Naive thymus-derived CD4-positive, alpha-beta T cell (primary cell): ENCODE measurements at regions of chr7 and their contacts with region 1.

Region 1: GRCh38 chr7:8125680-8126444 is 136.1 kb downstream of the ICA1 start:
- DNase-seq: peak; percentile 47 to 83 (median 77)
- ATAC-seq: peak; percentile 95
- H3K4me3 ChIP-seq: peak overlapping the region; percentile 9
- H3K4me3 Mint-ChIP-seq: peak overlapping the region; percentile 59 to 83 (median 75)
- H3K27ac ChIP-seq: peak overlapping the region; percentile 70
- H3K27ac Mint-ChIP-seq: peak overlapping the region; percentile 92 to 100 (median 99)
- H3K4me1 ChIP-seq: peaks cover 56 to 69% of the 10 kb centered on the region in 2 donors
- H3K4me1 Mint-ChIP-seq: peaks cover 56 to 88% (median 77%) of the 10 kb centered on the region in 7 donors
- H3K27me3 ChIP-seq: no peaks in the 10 kb centered on the region
- H3K27me3 Mint-ChIP-seq: no peaks in the 10 kb centered on the region

Region 2: GRCh38 chr7:7920481-7920880 is 205.4 kb before region 1 on chr7:
- CTCF ChIA-PET with region 1: no interaction called
- POLR2A ChIA-PET with region 1: no interaction called
- intact Hi-C with region 1: loop called in 1 of 2 experiments (anchors 5 kb)
- DNase-seq: peak in 3 of 9 donors; percentile 5 to 13 (median 7)
- ATAC-seq: peak; percentile 44
- H3K4me3 ChIP-seq: peak overlapping the region; percentile 26
- H3K4me3 Mint-ChIP-seq: peak overlapping the region in 8 of 10 donors; percentile 60 to 83 (median 70)
- H3K27ac ChIP-seq: no peak overlapping the region
- H3K27ac Mint-ChIP-seq: peak overlapping the region in 2 of 9 donors; percentile 18 to 71
- H3K4me1 ChIP-seq: peaks cover 0 to 8% of the 10 kb centered on the region in 2 donors
- H3K4me1 Mint-ChIP-seq: peaks cover 14 to 33% (median 18%) of the 10 kb centered on the region in 7 donors
- H3K27me3 ChIP-seq: no peaks in the 10 kb centered on the region
- H3K27me3 Mint-ChIP-seq: no peaks in the 10 kb centered on the region

Region 3: GRCh38 chr7:8042796-8043535 is 82.9 kb before region 1 on chr7:
- CTCF ChIA-PET with region 1: no interaction called
- POLR2A ChIA-PET with region 1: no interaction called
- intact Hi-C with region 1: no loop called
- DNase-seq: no peak
- ATAC-seq: no peak
- H3K4me3 ChIP-seq: no peak overlapping the region
- H3K4me3 Mint-ChIP-seq: no peak overlapping the region
- H3K27ac ChIP-seq: no peak overlapping the region
- H3K27ac Mint-ChIP-seq: peak overlapping the region in 4 of 9 donors; percentile 13 to 43 (median 34)
- H3K4me1 ChIP-seq: peaks cover 0 to 5% of the 10 kb centered on the region in 2 donors
- H3K4me1 Mint-ChIP-seq: peaks cover 25 to 61% (median 54%) of the 10 kb centered on the region in 7 donors
- H3K27me3 ChIP-seq: no peaks in the 10 kb centered on the region
- H3K27me3 Mint-ChIP-seq: no peaks in the 10 kb centered on the region

Region 4: DNA sequence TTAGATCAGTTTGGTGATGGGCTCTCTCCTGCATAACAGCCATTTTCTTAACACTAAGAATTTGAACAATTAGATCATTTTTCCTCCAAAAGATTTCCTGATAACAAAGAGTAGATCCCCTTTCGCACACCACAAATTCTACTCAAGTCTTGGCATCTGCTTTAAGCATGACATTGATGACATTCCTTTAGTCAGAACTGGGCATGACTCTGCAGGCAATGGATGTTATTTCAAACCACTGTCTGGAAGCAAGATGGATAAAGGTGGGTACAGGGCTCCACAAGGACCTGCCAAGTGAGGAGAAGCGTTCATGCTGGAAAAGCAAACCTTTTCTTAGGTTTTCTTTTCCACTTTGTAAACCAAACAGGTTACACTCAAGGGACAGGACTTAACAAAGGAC is 33.7 kb before region 1 on chr7:
- CTCF ChIA-PET with region 1: interaction called, 3 read pairs
- POLR2A ChIA-PET with region 1: interaction called, 3 read pairs
- intact Hi-C with region 1: loop called in 1 of 2 experiments (anchors 5 kb)
- DNase-seq: no peak
- ATAC-seq: no peak
- H3K4me3 ChIP-seq: no peak overlapping the region
- H3K4me3 Mint-ChIP-seq: no peak overlapping the region
- H3K27ac ChIP-seq: no peak overlapping the region
- H3K27ac Mint-ChIP-seq: peak overlapping the region in 1 of 9 donors; percentile 80
- H3K4me1 ChIP-seq: no peaks in the 10 kb centered on the region
- H3K4me1 Mint-ChIP-seq: peaks cover 0 to 10% (median 5%) of the 10 kb centered on the region in 7 donors
- H3K27me3 ChIP-seq: no peaks in the 10 kb centered on the region
- H3K27me3 Mint-ChIP-seq: no peaks in the 10 kb centered on the region

Region 5: DNA sequence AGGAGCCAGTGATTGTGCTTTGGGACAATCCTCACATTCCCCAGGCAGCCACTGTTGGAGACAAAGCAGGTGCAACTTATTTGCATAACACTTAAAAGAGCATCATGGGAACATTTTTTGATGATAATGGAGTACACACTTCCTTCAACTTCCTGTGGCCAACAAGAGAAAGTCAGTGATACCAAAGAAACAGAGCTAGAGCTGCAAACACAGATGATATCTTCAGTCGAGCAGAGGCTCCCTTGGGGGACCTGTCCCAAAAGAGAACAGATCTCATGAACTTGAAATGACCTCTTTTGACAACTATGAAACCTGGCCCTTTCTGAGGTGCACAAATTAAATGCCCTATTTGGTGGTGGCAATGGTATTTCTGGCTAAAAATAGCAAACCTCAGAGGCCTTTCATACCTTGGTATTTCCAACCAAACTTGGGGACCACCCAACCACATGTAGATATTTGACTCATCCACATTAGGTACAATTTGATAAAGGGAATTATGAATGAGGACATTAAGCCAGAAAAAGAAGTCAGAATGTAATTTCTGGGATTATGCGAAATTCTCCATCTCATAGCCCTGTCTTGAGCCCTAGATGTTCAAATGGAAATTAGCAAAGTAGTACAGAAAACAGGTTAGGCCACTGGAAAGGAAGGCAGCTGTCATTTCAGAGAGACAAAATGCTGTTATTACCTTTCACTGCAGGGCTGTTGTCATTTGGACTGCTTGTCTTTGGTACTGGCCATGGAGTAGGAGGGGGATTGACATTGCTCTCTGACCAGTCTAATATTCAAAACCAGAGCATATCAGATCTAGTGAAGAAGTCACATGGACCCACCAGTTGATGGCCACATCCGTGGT is 10.1 kb before region 1 on chr7:
- CTCF ChIA-PET with region 1: interaction called, 6 read pairs
- POLR2A ChIA-PET with region 1: interaction called, 11 read pairs
- intact Hi-C with region 1: loop called (anchors 1 kb)
- DNase-seq: peak in 3 of 9 donors; percentile 19 to 26 (median 19)
- ATAC-seq: peak; percentile 27
- H3K4me3 ChIP-seq: no peak overlapping the region
- H3K4me3 Mint-ChIP-seq: peak overlapping the region; percentile 16 to 60 (median 44)
- H3K27ac ChIP-seq: peak overlapping the region; percentile 23
- H3K27ac Mint-ChIP-seq: peak overlapping the region; percentile 43 to 95 (median 84)
- H3K4me1 ChIP-seq: peaks cover 26 to 29% of the 10 kb centered on the region in 2 donors
- H3K4me1 Mint-ChIP-seq: peaks cover 27 to 60% (median 48%) of the 10 kb centered on the region in 7 donors
- H3K27me3 ChIP-seq: no peaks in the 10 kb centered on the region
- H3K27me3 Mint-ChIP-seq: no peaks in the 10 kb centered on the region

Region 6: GRCh38 chr7:8143151-8143874 is 17.5 kb after region 1 on chr7:
- CTCF ChIA-PET with region 1: no interaction called
- POLR2A ChIA-PET with region 1: interaction called, 13 read pairs
- intact Hi-C with region 1: loop called in 1 of 2 experiments (anchors 2 kb)
- DNase-seq: peak in 1 of 9 donors; percentile 7
- ATAC-seq: peak; percentile 44
- H3K4me3 ChIP-seq: no peak overlapping the region
- H3K4me3 Mint-ChIP-seq: peak overlapping the region in 9 of 10 donors; percentile 8 to 69 (median 57)
- H3K27ac ChIP-seq: peak overlapping the region; percentile 33
- H3K27ac Mint-ChIP-seq: peak overlapping the region in 8 of 9 donors; percentile 78 to 92 (median 86)
- H3K4me1 ChIP-seq: peaks cover 0 to 11% of the 10 kb centered on the region in 2 donors
- H3K4me1 Mint-ChIP-seq: peaks cover 7 to 56% (median 49%) of the 10 kb centered on the region in 7 donors
- H3K27me3 ChIP-seq: no peaks in the 10 kb centered on the region
- H3K27me3 Mint-ChIP-seq: no peaks in the 10 kb centered on the region

Region 7: DNA sequence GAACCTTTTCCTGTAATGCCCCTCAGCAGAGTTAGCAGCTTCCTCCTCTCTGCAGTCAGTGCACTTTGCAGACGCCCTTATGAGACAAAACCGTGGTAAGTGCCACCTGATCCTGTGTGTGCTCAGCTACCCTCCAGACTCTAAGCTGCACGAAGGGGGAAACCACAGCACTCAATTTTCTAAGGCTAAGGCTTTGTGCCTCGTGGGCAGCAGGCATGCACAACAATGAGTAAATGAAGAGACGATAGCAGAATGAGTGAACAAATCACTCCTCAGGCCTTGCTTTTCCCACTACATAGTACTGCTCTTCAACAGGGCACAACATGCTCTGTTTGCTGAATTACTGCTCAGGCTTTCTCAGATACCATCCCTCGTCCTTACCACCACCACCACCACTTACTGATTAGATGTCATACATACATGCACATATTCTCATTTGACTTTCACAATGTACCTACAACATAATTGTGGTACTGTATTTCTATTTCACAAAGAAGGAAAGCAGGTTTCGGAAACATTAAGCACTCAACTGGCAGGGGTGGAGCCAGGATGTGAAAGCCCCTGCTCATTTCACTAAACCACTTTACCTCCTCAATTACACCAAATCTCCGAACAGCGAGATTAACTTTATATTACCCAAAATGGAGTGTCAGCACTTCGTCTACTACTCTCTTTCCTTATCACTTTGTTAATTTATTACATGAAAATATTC is 50.7 kb after region 1 on chr7:
- CTCF ChIA-PET with region 1: interaction called, 6 read pairs
- POLR2A ChIA-PET with region 1: interaction called, 22 read pairs
- intact Hi-C with region 1: loop called (anchors 1 kb)
- DNase-seq: peak; percentile 20 to 74 (median 70)
- ATAC-seq: peak; percentile 91
- H3K4me3 ChIP-seq: peak overlapping the region; percentile 44
- H3K4me3 Mint-ChIP-seq: peak overlapping the region; percentile 73 to 86 (median 77)
- H3K27ac ChIP-seq: peak overlapping the region; percentile 72
- H3K27ac Mint-ChIP-seq: peak overlapping the region; percentile 88 to 97 (median 96)
- H3K4me1 ChIP-seq: peaks cover 48 to 50% of the 10 kb centered on the region in 2 donors
- H3K4me1 Mint-ChIP-seq: peaks cover 36 to 70% (median 67%) of the 10 kb centered on the region in 7 donors
- H3K27me3 ChIP-seq: no peaks in the 10 kb centered on the region
- H3K27me3 Mint-ChIP-seq: no peaks in the 10 kb centered on the region

Region 8: GRCh38 chr7:8303904-8304528 is 178.2 kb after region 1 on chr7:
- CTCF ChIA-PET with region 1: no interaction called
- POLR2A ChIA-PET with region 1: no interaction called
- intact Hi-C with region 1: no loop called
- DNase-seq: no peak
- ATAC-seq: no peak
- H3K4me3 ChIP-seq: no peak overlapping the region
- H3K4me3 Mint-ChIP-seq: no peak overlapping the region
- H3K27ac ChIP-seq: no peak overlapping the region
- H3K27ac Mint-ChIP-seq: no peak overlapping the region
- H3K4me1 ChIP-seq: no peaks in the 10 kb centered on the region
- H3K4me1 Mint-ChIP-seq: no peaks in the 10 kb centered on the region
- H3K27me3 ChIP-seq: no peaks in the 10 kb centered on the region
- H3K27me3 Mint-ChIP-seq: peaks cover 0 to 24% (median 9%) of the 10 kb centered on the region in 5 donors